K562 (cell line): ENCODE measurements at regions of chr12 and their contacts with region 1.

Region 1: DNA sequence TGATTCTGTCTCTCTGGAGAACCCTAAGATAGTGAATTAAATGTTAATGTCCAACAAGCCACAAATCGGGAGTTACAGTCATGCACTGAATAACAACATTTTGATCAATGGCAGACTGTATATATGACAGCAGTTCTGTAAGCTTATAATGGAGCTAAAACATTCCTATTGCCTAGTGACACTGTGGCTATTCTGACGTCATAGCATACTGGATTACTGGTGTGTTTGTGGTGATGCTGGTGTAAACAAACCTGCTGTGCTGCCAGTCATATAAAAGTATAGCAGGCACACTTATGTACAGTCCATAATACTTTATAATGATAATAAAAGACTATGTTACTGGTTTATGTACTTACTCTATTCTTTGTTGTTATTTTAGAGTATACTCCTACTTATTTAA is 56.7 kb upstream of the BICD1 start:
- DNase-seq: no peak
- ATAC-seq: no peak
- H3K4me3 ChIP-seq: no peak overlapping the region
- H3K27ac ChIP-seq: no peak overlapping the region
- H3K4me1 ChIP-seq: peaks cover 18 to 35% of the 10 kb centered on the region in 2 experiments
- H3K27me3 ChIP-seq: no peaks in the 10 kb centered on the region
- CTCF ChIP-seq: no peak
- EP300 ChIP-seq: no peak
- POLR2A ChIP-seq: no peak
- RAD21 ChIP-seq: no peak

Region 2: DNA sequence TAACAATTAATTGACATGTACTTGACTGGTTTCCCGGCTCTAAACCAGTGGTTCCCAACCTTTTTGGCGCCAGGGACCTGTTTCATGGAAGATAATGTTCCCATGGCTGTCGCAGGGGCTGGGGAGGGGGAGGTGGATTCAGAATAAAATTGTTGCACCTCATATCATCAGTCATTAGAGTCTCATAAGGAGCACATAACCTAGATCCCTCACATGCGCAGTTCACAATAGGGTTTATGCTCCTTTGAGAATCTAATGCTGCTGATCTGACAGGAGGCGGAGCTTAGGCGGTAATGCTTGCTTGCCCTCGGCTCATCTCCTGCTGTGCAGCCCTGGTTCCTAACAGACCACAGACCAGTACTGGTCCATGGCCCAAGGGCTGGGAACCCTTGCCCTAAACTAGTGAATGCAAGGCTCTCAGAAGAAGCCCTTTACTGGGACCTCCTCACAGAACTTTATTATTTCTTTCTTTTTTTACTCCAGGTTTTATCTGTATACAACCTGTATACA is 637.6 kb before region 1 on chr12:
- CTCF ChIA-PET with region 1: no interaction called
- POLR2A ChIA-PET with region 1: no interaction called
- in situ Hi-C with region 1: no loop called
- intact Hi-C with region 1: no loop called
- DNase-seq: no peak
- ATAC-seq: peak; percentile 50; the same call in 2 of the 3 replicates
- H3K4me3 ChIP-seq: no peak overlapping the region
- H3K27ac ChIP-seq: no peak overlapping the region
- H3K4me1 ChIP-seq: no peaks in the 10 kb centered on the region
- H3K27me3 ChIP-seq: peaks cover 5 to 11% of the 10 kb centered on the region in 2 experiments; a peak in 3 of 5 replicates
- CTCF ChIP-seq: no peak
- EP300 ChIP-seq: no peak
- POLR2A ChIP-seq: no peak
- RAD21 ChIP-seq: no peak

Region 3: GRCh38 chr12:31728917-31729640 is 320.9 kb before region 1 on chr12 and contains the start of gene AMN1:
- CTCF ChIA-PET with region 1: no interaction called
- POLR2A ChIA-PET with region 1: interaction called, 4 read pairs
- in situ Hi-C with region 1: no loop called
- intact Hi-C with region 1: loop called (anchors 5 kb)
- DNase-seq: peak; percentile 92 to 100 (median 95)
- ATAC-seq: peak; percentile 89
- H3K4me3 ChIP-seq: peak within 1 kb of the TSS; percentile 70
- H3K27ac ChIP-seq: peak within 1 kb of the TSS; percentile 94
- H3K4me1 ChIP-seq: peaks cover 14 to 48% of the 10 kb centered on the region in 2 experiments
- H3K27me3 ChIP-seq: no peaks in the 10 kb centered on the region
- CTCF ChIP-seq: peak in 1 of 3 experiments; percentile 18; a peak in 1 of 6 replicates
- EP300 ChIP-seq: 0 out of 2 replicates have a peak, but pooled peaks have one; percentile 4
- POLR2A ChIP-seq: peak; percentile 87
- RAD21 ChIP-seq: peak; percentile 19 to 22; a peak in 3 of 4 replicates
- polyA plus RNA-seq, gene AMN1: 26.9 to 27.6 TPM

Region 4: GRCh38 chr12:31959161-31959700 is 90.7 kb before region 1 on chr12 and contains the start of gene RESF1:
- CTCF ChIA-PET with region 1: no interaction called
- POLR2A ChIA-PET with region 1: interaction called, 4 read pairs
- in situ Hi-C with region 1: no loop called
- intact Hi-C with region 1: loop called (anchors 2 kb)
- DNase-seq: peak; percentile 85 to 94 (median 88)
- ATAC-seq: peak; percentile 95
- H3K4me3 ChIP-seq: peak within 1 kb of the TSS; percentile 62
- H3K27ac ChIP-seq: peak within 1 kb of the TSS; percentile 90
- H3K4me1 ChIP-seq: peaks cover 17 to 21% of the 10 kb centered on the region in 2 experiments; a peak in 4 of 5 replicates
- H3K27me3 ChIP-seq: no peaks in the 10 kb centered on the region
- CTCF ChIP-seq: no peak; a peak in 1 of 6 replicates
- EP300 ChIP-seq: peak; percentile 35; the same call in 1 of the 2 replicates
- POLR2A ChIP-seq: peak; percentile 74
- RAD21 ChIP-seq: peak; percentile 39 to 51
- polyA plus RNA-seq, gene RESF1: 21.5 to 30.1 TPM

Region 5: DNA sequence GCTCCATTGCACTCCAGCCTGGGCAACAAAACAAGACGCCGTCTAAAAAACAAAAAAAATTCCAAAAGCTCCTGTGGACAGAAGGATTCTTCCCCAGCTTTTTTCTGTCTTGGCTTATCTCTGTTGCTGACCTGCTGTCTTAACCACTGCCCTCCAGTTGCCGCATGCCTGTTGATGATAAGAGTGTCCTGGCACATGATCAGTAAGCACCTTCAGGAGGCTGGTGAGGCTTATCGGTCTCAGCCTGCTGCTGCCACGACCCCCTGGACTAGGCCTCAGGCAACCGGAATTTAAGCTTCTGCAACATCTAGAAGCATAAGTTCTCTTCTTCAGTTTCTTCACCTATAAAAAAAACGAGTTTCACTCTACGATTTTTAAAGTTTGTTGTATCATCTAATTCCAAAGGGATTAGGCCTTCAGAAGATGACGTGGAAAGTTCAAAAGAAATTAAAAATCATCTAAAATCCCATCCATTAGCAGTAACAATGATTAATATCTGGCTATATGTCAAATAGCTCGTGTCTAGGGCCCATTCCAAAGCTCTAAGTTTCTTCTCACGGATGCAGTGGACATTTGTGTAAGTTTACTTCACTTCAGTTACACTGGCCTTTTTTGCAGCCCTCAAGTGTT is 44.3 kb before region 1 on chr12:
- CTCF ChIA-PET with region 1: no interaction called
- POLR2A ChIA-PET with region 1: interaction called, 4 read pairs
- in situ Hi-C with region 1: no loop called
- intact Hi-C with region 1: loop called (anchors 2 kb)
- DNase-seq: peak; percentile 96 to 98 (median 97)
- ATAC-seq: peak; percentile 90
- H3K4me3 ChIP-seq: no peak overlapping the region
- H3K27ac ChIP-seq: peak overlapping the region; percentile 41
- H3K4me1 ChIP-seq: peaks cover 21 to 24% of the 10 kb centered on the region in 2 experiments; a peak in 4 of 5 replicates
- H3K27me3 ChIP-seq: no peaks in the 10 kb centered on the region
- CTCF ChIP-seq: peak in 1 of 3 experiments; percentile 11; a peak in 1 of 6 replicates
- EP300 ChIP-seq: peak; percentile 99
- POLR2A ChIP-seq: no peak
- RAD21 ChIP-seq: peak; percentile 41 to 61; a peak in 3 of 4 replicates

Region 6: GRCh38 chr12:32031109-32031508 is 18.9 kb before region 1 on chr12:
- CTCF ChIA-PET with region 1: no interaction called
- POLR2A ChIA-PET with region 1: interaction called, 4 read pairs
- in situ Hi-C with region 1: no loop called
- intact Hi-C with region 1: loop called (anchors 1 kb)
- DNase-seq: peak; percentile 80 to 96 (median 83)
- ATAC-seq: peak; percentile 98
- H3K4me3 ChIP-seq: no peak overlapping the region
- H3K27ac ChIP-seq: peak overlapping the region; percentile 68
- H3K4me1 ChIP-seq: peaks cover 25 to 41% of the 10 kb centered on the region in 2 experiments
- H3K27me3 ChIP-seq: no peaks in the 10 kb centered on the region
- CTCF ChIP-seq: peak in 1 of 3 experiments; percentile 11; a peak in 1 of 6 replicates
- EP300 ChIP-seq: peak; percentile 100
- POLR2A ChIP-seq: no peak
- RAD21 ChIP-seq: peak; percentile 38 to 58; a peak in 3 of 4 replicates

Region 7: DNA sequence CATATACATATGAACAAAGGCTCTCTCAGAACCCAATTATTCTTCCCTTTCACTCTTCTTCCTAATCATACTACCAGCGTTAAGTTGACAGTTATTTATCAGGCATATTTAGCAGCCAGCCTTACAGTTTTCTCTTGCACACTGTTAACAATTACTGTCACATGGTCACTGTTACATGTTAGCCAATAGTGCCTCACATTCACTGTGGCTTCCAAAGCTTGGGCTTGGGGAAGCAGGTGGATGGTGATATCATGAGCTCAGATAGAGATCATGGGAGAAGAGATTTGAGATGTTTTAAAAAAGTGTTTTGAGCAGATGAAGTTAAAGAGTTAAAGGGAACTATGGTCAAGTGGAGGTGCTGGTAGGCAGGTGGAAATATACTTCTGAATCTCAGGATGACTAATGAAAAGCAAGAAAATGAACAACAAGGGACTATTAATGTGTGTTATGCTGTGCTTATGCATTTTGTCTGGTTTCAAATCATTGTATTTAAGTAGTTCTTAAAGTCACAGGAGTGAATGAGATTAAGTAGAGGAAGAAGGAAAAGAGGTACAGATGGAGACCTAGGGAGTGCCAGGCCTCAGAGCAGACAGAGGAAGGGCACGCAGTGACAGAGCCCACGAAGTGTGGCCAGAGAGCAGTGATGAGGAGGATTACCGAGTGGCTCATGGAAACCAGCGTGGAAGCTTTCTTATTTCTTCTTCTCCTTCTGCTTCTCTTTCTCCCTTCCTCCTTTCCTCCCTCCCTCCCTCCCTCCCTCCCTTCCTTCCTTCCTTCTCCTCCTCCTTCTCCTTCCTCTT is 96.3 kb after region 1 on chr12:
- CTCF ChIA-PET with region 1: no interaction called
- POLR2A ChIA-PET with region 1: no interaction called
- in situ Hi-C with region 1: no loop called
- intact Hi-C with region 1: no loop called
- DNase-seq: no peak
- ATAC-seq: no peak
- H3K4me3 ChIP-seq: no peak overlapping the region
- H3K27ac ChIP-seq: no peak overlapping the region
- H3K4me1 ChIP-seq: no peaks in the 10 kb centered on the region
- H3K27me3 ChIP-seq: no peaks in the 10 kb centered on the region
- CTCF ChIP-seq: no peak
- EP300 ChIP-seq: no peak
- POLR2A ChIP-seq: no peak
- RAD21 ChIP-seq: no peak